ENCODE measurements at regions of chr11 and their contacts with region 1.

Region 1: GRCh38 chr11:106087815-106088435 is 10.5 kb downstream of the AASDHPPT start:
- DNase-seq: no peak
- H3K4me3 ChIP-seq: no peak overlapping the region
- CTCF ChIP-seq: peak; percentile 76

Region 2: DNA sequence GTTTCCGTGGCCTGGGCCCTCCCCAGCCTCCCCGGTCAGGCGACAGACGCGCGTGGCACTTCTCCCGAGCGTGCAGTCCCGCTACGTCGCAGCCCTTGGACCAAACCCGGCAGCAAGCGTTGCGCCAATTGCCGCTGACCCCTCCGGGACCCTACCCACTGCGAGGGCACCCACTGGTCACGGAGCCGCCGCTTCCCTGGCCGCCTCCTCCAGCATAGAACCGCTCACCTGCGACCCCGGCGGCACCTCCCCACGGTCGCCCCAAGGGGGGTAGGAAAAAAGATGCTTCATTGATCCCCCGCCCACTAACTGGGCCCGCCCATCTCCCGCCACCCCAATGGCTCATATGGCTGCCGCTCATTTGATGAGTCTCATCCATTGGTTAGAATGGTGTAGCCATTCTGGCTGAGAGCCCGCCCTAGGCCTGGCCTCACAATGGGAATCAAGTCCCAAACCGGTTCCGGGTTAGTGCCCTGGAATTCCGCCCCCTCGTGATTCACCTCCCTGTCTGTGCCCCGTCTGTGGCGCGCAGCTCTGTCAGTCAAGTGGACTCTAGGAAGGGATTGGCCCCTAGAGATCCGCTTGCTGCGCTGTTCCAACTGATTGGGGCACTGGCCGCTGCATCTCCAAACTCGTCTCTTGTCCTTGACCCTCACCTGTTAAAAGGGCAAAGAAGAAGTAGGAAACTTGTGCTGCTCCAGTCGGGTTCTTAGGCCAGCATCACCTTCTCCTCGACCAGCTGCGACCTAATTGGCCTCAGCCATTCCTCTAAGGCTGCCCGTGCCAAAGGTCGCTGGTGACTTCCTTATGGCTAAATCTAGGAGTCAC is 65.7 kb before region 1 on chr11 and contains the start of gene MSANTD4:
- CTCF ChIA-PET with region 1: no interaction called
- POLR2A ChIA-PET with region 1: no interaction called
- DNase-seq: peak; percentile 96
- H3K4me3 ChIP-seq: peak within 1 kb of the TSS; percentile 92
- CTCF ChIP-seq: no peak

Region 3: DNA sequence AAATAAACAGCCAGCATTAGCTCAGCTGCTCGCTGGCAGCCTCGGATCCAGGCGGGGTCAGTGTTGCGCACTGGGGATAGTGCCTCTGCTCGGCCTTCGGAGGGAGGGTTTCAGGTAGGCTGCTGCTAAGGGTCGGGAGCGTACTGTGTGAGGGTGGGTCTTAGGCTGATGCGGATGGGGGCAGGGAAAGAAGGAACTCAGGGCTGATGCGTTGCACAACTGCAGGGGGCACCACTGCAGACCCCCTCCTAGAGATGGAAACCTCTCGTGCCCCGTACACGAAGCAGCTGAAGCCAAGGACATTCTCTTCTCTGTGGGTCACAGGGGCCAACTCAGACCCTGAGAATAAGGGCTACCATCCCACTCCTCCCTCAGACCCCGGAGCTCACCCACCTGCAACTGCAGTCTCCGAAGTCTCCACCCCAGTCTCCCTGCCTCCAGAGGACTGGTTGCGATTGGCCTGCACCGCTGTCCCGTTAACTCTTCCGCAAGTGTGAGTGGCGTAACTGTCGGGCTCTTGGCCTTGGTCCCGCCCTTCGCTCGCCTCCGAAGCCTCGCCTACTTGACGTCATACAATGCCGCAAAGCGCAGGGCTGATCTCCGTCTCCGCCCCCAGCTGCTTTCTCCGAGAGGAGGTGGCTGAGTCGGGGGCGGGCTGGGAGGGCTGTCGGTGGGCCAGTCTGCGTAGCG is 10.9 kb before region 1 on chr11 and contains the start of gene KBTBD3:
- CTCF ChIA-PET with region 1: interaction called, 10 read pairs
- POLR2A ChIA-PET with region 1: no interaction called
- DNase-seq: peak; percentile 94
- H3K4me3 ChIP-seq: peak within 1 kb of the TSS; percentile 95
- CTCF ChIP-seq: peak; percentile 52

Region 4: DNA sequence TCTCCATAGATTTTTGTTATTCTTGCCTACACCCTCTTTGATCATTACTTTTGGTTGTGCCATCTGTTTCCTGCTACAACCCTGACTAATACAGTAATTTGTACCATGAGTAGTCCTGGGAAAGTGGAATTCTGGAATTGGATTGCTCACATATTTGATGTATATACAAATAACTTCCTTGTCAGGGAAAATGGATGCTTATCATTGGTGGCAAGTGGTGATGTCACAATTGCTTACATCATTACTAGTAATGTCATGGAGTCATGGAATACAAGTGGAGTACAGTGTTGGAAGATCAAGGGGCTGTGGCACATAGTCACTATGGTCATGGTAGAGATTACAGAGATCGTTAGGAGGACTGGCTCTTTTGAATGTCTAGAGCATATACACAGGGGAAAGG is 13.9 kb after region 1 on chr11:
- CTCF ChIA-PET with region 1: interaction called, 11 read pairs
- POLR2A ChIA-PET with region 1: no interaction called
- DNase-seq: peak; percentile 45
- H3K4me3 ChIP-seq: no peak overlapping the region
- CTCF ChIP-seq: no peak

Measured in AG04449 (cell line).